Heart left ventricle (tissue), 16 donors: ENCODE measurements at regions of chr4 and their contacts with region 1.

Region 1: GRCh38 chr4:123073650-123074049 is 151.3 kb upstream of the NUDT6 start:
- DNase-seq: no peak
- ATAC-seq: no peak
- H3K4me3 ChIP-seq: no peak overlapping the region
- H3K27ac ChIP-seq: no peak overlapping the region
- H3K4me1 ChIP-seq: no peaks in the 10 kb centered on the region
- H3K27me3 ChIP-seq: no peaks in the 10 kb centered on the region
- CTCF ChIP-seq: no peak
- POLR2A ChIP-seq: no peak

Region 2: GRCh38 chr4:123096038-123096437 is 22.4 kb after region 1 on chr4:
- intact Hi-C with region 1: loop called in 1 of 10 experiments (anchors 2 kb)
- DNase-seq: no peak
- ATAC-seq: no peak
- H3K4me3 ChIP-seq: no peak overlapping the region
- H3K27ac ChIP-seq: no peak overlapping the region
- H3K4me1 ChIP-seq: no peaks in the 10 kb centered on the region
- H3K27me3 ChIP-seq: no peaks in the 10 kb centered on the region
- CTCF ChIP-seq: no peak
- POLR2A ChIP-seq: no peak